Right cardiac atrium (tissue), 5 donors: ENCODE measurements at regions of chr6 and their contacts with region 1.

Region 1: GRCh38 chr6:137013738-137014602 is 30.8 kb downstream of the IL20RA start:
- DNase-seq: no peak
- ATAC-seq: peak; percentile 34 to 75
- H3K4me3 ChIP-seq: no peak overlapping the region
- H3K27ac ChIP-seq: no peak overlapping the region
- H3K4me1 ChIP-seq: no peaks in the 10 kb centered on the region
- H3K27me3 ChIP-seq: no peaks in the 10 kb centered on the region

Region 2: DNA sequence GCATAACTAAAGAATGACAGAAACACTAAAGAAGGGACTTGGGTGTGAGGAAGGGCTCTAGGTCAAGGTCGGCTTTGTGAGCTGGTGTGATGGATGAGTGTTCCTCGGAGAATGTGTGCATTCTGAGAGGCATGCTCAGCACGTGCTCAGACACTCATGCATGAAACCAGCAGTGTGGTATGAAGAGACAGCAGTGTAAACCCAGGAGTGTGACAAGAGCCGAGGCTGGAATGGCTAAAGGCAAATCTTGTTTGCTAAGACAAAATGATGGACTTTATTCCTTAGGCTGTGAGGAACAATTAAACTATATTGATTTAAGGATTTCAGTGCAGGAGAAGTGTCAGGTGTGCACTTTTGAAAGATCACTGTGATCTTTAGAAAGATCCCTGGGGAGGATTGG is 356.3 kb before region 1 on chr6:
- intact Hi-C with region 1: no loop called
- DNase-seq: no peak
- ATAC-seq: no peak
- H3K4me3 ChIP-seq: no peak overlapping the region
- H3K27ac ChIP-seq: no peak overlapping the region
- H3K4me1 ChIP-seq: no peaks in the 10 kb centered on the region
- H3K27me3 ChIP-seq: no peaks in the 10 kb centered on the region

Region 3: GRCh38 chr6:136846046-136846445 is 167.9 kb before region 1 on chr6:
- intact Hi-C with region 1: loop called in 1 of 4 experiments (anchors 10 kb)
- DNase-seq: no peak
- ATAC-seq: no peak
- H3K4me3 ChIP-seq: no peak overlapping the region
- H3K27ac ChIP-seq: no peak overlapping the region
- H3K4me1 ChIP-seq: peaks cover 3% of the 10 kb centered on the region
- H3K27me3 ChIP-seq: no peaks in the 10 kb centered on the region